Activated B cell treated with CpG ODN at 0.5 μM for 24 hours (primary cell): ENCODE measurements at regions of chr6 and their contacts with region 1.

Region 1: DNA sequence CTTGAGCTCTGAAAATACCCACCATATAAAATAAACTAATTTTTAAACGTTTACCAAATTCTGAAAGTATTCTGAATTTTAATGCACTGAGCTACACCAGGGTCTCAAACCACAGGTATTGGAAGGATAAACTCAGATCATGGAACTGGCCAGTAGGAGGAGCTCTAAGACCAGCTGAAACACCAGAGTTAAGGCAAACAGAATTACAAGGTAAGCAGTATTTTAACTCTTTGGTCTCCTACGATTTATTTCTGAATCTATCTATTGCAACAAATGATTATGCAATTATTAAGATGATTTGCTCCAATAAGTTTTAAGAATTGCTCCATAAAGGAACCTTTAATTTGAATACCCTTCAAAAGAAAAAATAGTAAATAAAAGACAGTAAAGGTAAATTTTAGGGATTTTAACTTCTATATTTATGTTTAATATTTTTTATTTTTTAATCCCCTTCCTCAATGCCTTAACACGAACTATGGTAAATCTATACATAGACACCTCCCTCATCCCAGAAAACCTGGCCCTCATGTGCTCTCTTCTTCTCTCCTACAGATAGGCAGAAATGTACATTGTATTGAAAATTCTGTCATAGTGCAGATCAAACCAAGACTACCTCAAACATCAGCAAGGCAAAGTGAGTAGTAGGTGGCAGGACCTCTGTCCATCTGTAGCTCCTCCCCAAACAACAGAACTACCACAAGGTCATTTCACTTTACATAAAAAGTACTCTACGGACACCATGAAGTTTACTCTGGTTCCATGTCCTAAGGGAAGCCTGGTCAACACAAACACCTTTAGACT is 58.4 kb downstream of the SMLR1 start:
- DNase-seq: no peak
- ATAC-seq: peak; percentile 81
- H3K4me3 Mint-ChIP-seq: no peak overlapping the region
- H3K27ac Mint-ChIP-seq: no peak overlapping the region
- H3K4me1 Mint-ChIP-seq: no peaks in the 10 kb centered on the region
- H3K27me3 Mint-ChIP-seq: no peaks in the 10 kb centered on the region
- CTCF ChIP-seq: peak; percentile 30

Region 2: GRCh38 chr6:131038597-131039344 is 153.2 kb after region 1 on chr6:
- CTCF ChIA-PET with region 1: no interaction called
- POLR2A ChIA-PET with region 1: no interaction called
- intact Hi-C with region 1: no loop called
- DNase-seq: no peak
- ATAC-seq: no peak
- H3K4me3 Mint-ChIP-seq: no peak overlapping the region
- H3K27ac Mint-ChIP-seq: no peak overlapping the region
- H3K4me1 Mint-ChIP-seq: peaks cover 2% of the 10 kb centered on the region
- H3K27me3 Mint-ChIP-seq: no peaks in the 10 kb centered on the region
- CTCF ChIP-seq: no peak

Region 3: GRCh38 chr6:131116749-131117360 is 231.3 kb after region 1 on chr6:
- CTCF ChIA-PET with region 1: interaction called, 184 read pairs
- POLR2A ChIA-PET with region 1: interaction called, 4 read pairs
- intact Hi-C with region 1: loop called (anchors 1 kb)
- DNase-seq: no peak
- ATAC-seq: peak; percentile 34
- H3K4me3 Mint-ChIP-seq: no peak overlapping the region
- H3K27ac Mint-ChIP-seq: no peak overlapping the region
- H3K4me1 Mint-ChIP-seq: peaks cover 14% of the 10 kb centered on the region
- H3K27me3 Mint-ChIP-seq: no peaks in the 10 kb centered on the region
- CTCF ChIP-seq: peak; percentile 33

Region 4: DNA sequence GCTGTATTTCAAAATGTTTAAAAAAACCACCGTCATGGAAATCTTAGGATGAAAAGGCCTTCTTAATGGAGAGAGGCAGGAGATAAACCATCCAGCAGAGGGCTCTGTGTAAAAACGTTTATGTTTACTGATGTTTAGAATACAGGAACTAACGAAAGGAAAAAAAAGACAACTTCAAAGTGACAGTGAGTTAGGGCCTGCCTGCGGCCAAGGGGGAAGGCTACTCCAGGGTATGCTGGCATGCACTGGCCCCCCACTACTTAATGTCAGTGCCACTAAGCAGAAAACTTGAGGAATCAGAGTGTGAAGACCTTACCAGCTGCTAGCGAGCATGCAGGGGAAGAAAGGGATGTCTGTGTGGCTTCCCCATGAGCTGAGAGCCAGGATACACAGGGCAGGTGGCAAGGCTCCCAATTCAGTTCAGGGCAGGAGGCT is 297.4 kb after region 1 on chr6:
- CTCF ChIA-PET with region 1: interaction called, 6 read pairs
- POLR2A ChIA-PET with region 1: no interaction called
- intact Hi-C with region 1: loop called (anchors 1 kb)
- DNase-seq: no peak
- ATAC-seq: peak; percentile 25
- H3K4me3 Mint-ChIP-seq: peak overlapping the region; percentile 33
- H3K27ac Mint-ChIP-seq: no peak overlapping the region
- H3K4me1 Mint-ChIP-seq: peaks cover 6% of the 10 kb centered on the region
- H3K27me3 Mint-ChIP-seq: no peaks in the 10 kb centered on the region
- CTCF ChIP-seq: no peak

Region 5: DNA sequence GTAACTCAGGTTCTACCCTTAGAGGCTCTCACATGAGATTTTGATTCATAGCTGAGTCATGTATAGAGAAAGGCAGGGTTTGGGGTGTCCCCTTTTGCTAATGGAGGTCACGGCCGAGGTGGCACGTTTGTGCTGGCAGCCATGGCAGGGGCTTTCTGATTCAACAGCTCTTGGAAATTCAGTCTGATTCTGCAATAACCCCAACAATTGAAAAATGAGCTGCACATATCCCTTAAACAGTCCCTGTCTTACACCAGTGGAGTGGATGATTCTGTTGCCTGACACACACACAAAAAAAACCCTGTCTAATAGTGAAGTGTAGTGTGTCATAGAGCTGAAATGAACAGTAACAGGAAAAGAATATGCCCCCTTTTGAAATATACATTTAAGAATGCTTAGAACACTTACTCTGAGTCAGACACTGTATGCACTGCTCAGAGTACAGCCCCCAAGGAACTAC is 647.0 kb after region 1 on chr6:
- CTCF ChIA-PET with region 1: interaction called, 47 read pairs
- POLR2A ChIA-PET with region 1: interaction called, 3 read pairs
- intact Hi-C with region 1: loop called (anchors 1 kb)
- DNase-seq: no peak
- ATAC-seq: peak; percentile 47
- H3K4me3 Mint-ChIP-seq: no peak overlapping the region
- H3K27ac Mint-ChIP-seq: no peak overlapping the region
- H3K4me1 Mint-ChIP-seq: peaks cover 10% of the 10 kb centered on the region
- H3K27me3 Mint-ChIP-seq: no peaks in the 10 kb centered on the region
- CTCF ChIP-seq: no peak

Region 6: GRCh38 chr6:131627724-131628682 is 742.4 kb after region 1 on chr6 and contains the start of gene MED23:
- CTCF ChIA-PET with region 1: interaction called, 11 read pairs
- POLR2A ChIA-PET with region 1: no interaction called
- intact Hi-C with region 1: loop called (anchors 1 kb)
- DNase-seq: peak; percentile 98
- ATAC-seq: peak; percentile 95
- H3K4me3 Mint-ChIP-seq: peak within 1 kb of the TSS; percentile 99
- H3K27ac Mint-ChIP-seq: peak within 1 kb of the TSS; percentile 94
- H3K4me1 Mint-ChIP-seq: peaks cover 31% of the 10 kb centered on the region
- H3K27me3 Mint-ChIP-seq: no peaks in the 10 kb centered on the region
- CTCF ChIP-seq: peak; percentile 62
- total RNA-seq, gene MED23: 45.3 and 51.0 TPM in 2 replicates